ENCODE measurements at regions of chr10 and their contacts with region 1.

Region 1: GRCh38 chr10:9010093-9010492 is 955.6 kb downstream of the GATA3 start:
- DNase-seq: peak; percentile 39
- H3K4me3 Mint-ChIP-seq: no peak overlapping the region
- H3K27ac Mint-ChIP-seq: no peak overlapping the region
- H3K4me1 Mint-ChIP-seq: peaks cover 47% of the 10 kb centered on the region
- H3K27me3 Mint-ChIP-seq: no peaks in the 10 kb centered on the region

Region 2: GRCh38 chr10:7857262-7857661 is 1152.8 kb before region 1 on chr10:
- CTCF ChIA-PET with region 1: no interaction called
- intact Hi-C with region 1: no loop called
- DNase-seq: no peak
- H3K4me3 Mint-ChIP-seq: no peak overlapping the region
- H3K27ac Mint-ChIP-seq: no peak overlapping the region
- H3K4me1 Mint-ChIP-seq: peaks cover 15% of the 10 kb centered on the region
- H3K27me3 Mint-ChIP-seq: no peaks in the 10 kb centered on the region

Region 3: GRCh38 chr10:8876171-8876570 is 133.9 kb before region 1 on chr10:
- CTCF ChIA-PET with region 1: no interaction called
- intact Hi-C with region 1: no loop called
- DNase-seq: no peak
- H3K4me3 Mint-ChIP-seq: no peak overlapping the region
- H3K27ac Mint-ChIP-seq: no peak overlapping the region
- H3K4me1 Mint-ChIP-seq: no peaks in the 10 kb centered on the region
- H3K27me3 Mint-ChIP-seq: peaks cover 2% of the 10 kb centered on the region

Region 4: GRCh38 chr10:8913675-8914074 is 96.4 kb before region 1 on chr10:
- CTCF ChIA-PET with region 1: no interaction called
- intact Hi-C with region 1: no loop called
- DNase-seq: no peak
- H3K4me3 Mint-ChIP-seq: no peak overlapping the region
- H3K27ac Mint-ChIP-seq: no peak overlapping the region
- H3K4me1 Mint-ChIP-seq: no peaks in the 10 kb centered on the region
- H3K27me3 Mint-ChIP-seq: no peaks in the 10 kb centered on the region

Region 5: DNA sequence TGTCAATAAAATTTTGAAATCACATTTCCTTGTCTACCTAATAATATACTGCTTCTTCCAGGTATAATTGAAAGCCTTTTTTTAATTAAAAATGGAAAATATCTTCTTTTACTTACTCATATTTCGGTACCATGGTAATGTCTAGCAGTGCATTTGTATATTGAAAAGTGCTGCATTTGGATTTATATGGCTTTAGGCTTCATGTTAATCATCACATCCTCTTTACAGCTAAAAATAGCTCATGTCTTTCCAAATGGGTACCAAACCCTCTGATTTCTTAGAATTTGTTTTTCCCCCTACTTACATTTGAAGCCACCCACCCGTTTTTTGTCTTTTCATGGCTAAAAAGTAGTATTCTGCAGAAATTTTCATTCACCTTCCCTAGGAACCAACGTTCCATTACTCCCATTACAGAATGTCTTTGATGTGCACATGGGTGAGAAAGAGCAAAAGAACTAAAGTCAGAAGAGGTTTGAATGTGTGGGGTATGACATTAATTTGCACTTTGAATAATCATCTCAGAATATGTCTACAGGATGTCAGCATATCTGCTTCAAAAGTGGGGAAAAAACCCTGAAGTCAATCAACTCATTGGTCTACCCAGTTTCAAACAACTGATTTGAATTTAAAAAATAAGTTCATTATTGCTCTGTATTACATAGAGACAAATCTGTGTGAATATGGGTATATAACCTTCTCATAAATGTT is 19.7 kb before region 1 on chr10:
- CTCF ChIA-PET with region 1: interaction called, 3 read pairs
- intact Hi-C with region 1: loop called (anchors 2 kb)
- DNase-seq: no peak
- H3K4me3 Mint-ChIP-seq: no peak overlapping the region
- H3K27ac Mint-ChIP-seq: no peak overlapping the region
- H3K4me1 Mint-ChIP-seq: peaks cover 17% of the 10 kb centered on the region
- H3K27me3 Mint-ChIP-seq: no peaks in the 10 kb centered on the region

Region 6: DNA sequence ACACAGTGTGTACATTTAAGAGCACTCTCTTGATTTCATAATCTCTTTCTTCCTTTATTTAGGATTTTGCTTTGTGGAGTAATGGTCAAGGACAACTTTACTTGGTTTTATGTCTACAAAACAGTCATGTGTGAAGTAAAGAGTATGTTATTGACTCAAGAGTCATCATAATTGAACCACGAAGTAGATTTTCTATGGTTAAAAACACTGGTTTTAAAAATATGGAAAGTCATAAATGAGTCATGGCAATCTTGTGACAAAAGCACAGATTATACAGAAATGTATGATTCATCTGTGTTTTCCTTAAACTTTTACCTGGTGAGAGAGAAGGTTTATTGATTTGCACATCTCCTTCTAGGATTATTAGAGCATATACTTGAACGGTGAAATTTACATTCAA is 14.1 kb after region 1 on chr10:
- CTCF ChIA-PET with region 1: no interaction called
- intact Hi-C with region 1: loop called (anchors 2 kb)
- DNase-seq: no peak
- H3K4me3 Mint-ChIP-seq: no peak overlapping the region
- H3K27ac Mint-ChIP-seq: no peak overlapping the region
- H3K4me1 Mint-ChIP-seq: peaks cover 7% of the 10 kb centered on the region
- H3K27me3 Mint-ChIP-seq: peaks cover 9% of the 10 kb centered on the region

Region 7: GRCh38 chr10:9051323-9051974 is 41.4 kb after region 1 on chr10:
- CTCF ChIA-PET with region 1: no interaction called
- intact Hi-C with region 1: no loop called
- DNase-seq: no peak
- H3K4me3 Mint-ChIP-seq: no peak overlapping the region
- H3K27ac Mint-ChIP-seq: no peak overlapping the region
- H3K4me1 Mint-ChIP-seq: peaks cover 14% of the 10 kb centered on the region
- H3K27me3 Mint-ChIP-seq: no peaks in the 10 kb centered on the region

Region 8: GRCh38 chr10:9175200-9175599 is 165.1 kb after region 1 on chr10:
- CTCF ChIA-PET with region 1: no interaction called
- intact Hi-C with region 1: loop called (anchors 1 kb)
- DNase-seq: no peak
- H3K4me3 Mint-ChIP-seq: no peak overlapping the region
- H3K27ac Mint-ChIP-seq: no peak overlapping the region
- H3K4me1 Mint-ChIP-seq: peaks cover 13% of the 10 kb centered on the region
- H3K27me3 Mint-ChIP-seq: peaks cover 4% of the 10 kb centered on the region